ENCODE measurements at regions of chr6 and their contacts with region 1.

Region 1: GRCh38 chr6:140062043-140063020 is 687.9 kb upstream of the CITED2 start:
- DNase-seq: peak; percentile 96
- ATAC-seq: peak; percentile 80
- H3K4me3 ChIP-seq: no peak overlapping the region
- H3K27ac ChIP-seq: peak overlapping the region; percentile 100
- H3K4me1 ChIP-seq: peaks cover 15% of the 10 kb centered on the region
- H3K27me3 ChIP-seq: no peaks in the 10 kb centered on the region
- CTCF ChIP-seq: no peak
- POLR2A ChIP-seq: no peak
- RAD21 ChIP-seq: 0 out of 2 replicates have a peak, but pooled peaks have one; percentile 15

Region 2: GRCh38 chr6:140436013-140436811 is 373.9 kb after region 1 on chr6:
- CTCF ChIA-PET with region 1: no interaction called
- POLR2A ChIA-PET with region 1: no interaction called
- dilution Hi-C with region 1: no loop called
- in situ Hi-C with region 1: no loop called
- intact Hi-C with region 1: loop called (anchors 5 kb)
- DNase-seq: peak; percentile 67
- ATAC-seq: peak; percentile 71
- H3K4me3 ChIP-seq: no peak overlapping the region
- H3K27ac ChIP-seq: peak overlapping the region; percentile 64; the same call in 1 of the 2 replicates
- H3K4me1 ChIP-seq: peaks cover 13% of the 10 kb centered on the region; the same call in 1 of the 2 replicates
- H3K27me3 ChIP-seq: no peaks in the 10 kb centered on the region
- CTCF ChIP-seq: no peak
- POLR2A ChIP-seq: no peak
- RAD21 ChIP-seq: no peak

Measured in IMR-90 (cell line).